PC-9 (cell line): ENCODE measurements at regions of chr4 and their contacts with region 1.

Region 1: GRCh38 chr4:68375667-68376559 is 26.0 kb upstream of the YTHDC1 start:
- DNase-seq: peak; percentile 40 to 65
- H3K4me3 ChIP-seq: peak overlapping the region; percentile 62; the same call in 1 of the 2 replicates
- H3K27ac ChIP-seq: no peak overlapping the region
- H3K4me1 ChIP-seq: 0 out of 2 replicates have a peak, but pooled peaks cover 7% of the 10 kb centered on the region
- H3K27me3 ChIP-seq: no peaks in the 10 kb centered on the region
- CTCF ChIP-seq: peak; percentile 79

Region 2: GRCh38 chr4:67465032-67465762 is 910.7 kb before region 1 on chr4:
- CTCF ChIA-PET with region 1: no interaction called
- POLR2A ChIA-PET with region 1: no interaction called
- intact Hi-C with region 1: no loop called
- DNase-seq: no peak
- H3K4me3 ChIP-seq: no peak overlapping the region
- H3K27ac ChIP-seq: no peak overlapping the region
- H3K4me1 ChIP-seq: no peaks in the 10 kb centered on the region
- H3K27me3 ChIP-seq: no peaks in the 10 kb centered on the region
- CTCF ChIP-seq: no peak

Region 3: GRCh38 chr4:68141852-68142251 is 234.1 kb before region 1 on chr4:
- CTCF ChIA-PET with region 1: no interaction called
- POLR2A ChIA-PET with region 1: no interaction called
- intact Hi-C with region 1: no loop called
- DNase-seq: no peak
- H3K4me3 ChIP-seq: no peak overlapping the region
- H3K27ac ChIP-seq: no peak overlapping the region
- H3K4me1 ChIP-seq: no peaks in the 10 kb centered on the region
- H3K27me3 ChIP-seq: no peaks in the 10 kb centered on the region
- CTCF ChIP-seq: no peak

Region 4: GRCh38 chr4:68271851-68272756 is 103.8 kb before region 1 on chr4:
- CTCF ChIA-PET with region 1: interaction called, 5 read pairs
- POLR2A ChIA-PET with region 1: no interaction called
- intact Hi-C with region 1: loop called (anchors 1 kb)
- DNase-seq: peak in 1 of 2 experiments; percentile 48
- H3K4me3 ChIP-seq: no peak overlapping the region
- H3K27ac ChIP-seq: no peak overlapping the region
- H3K4me1 ChIP-seq: no peaks in the 10 kb centered on the region
- H3K27me3 ChIP-seq: no peaks in the 10 kb centered on the region
- CTCF ChIP-seq: peak; percentile 76

Region 5: GRCh38 chr4:68304731-68305130 is 71.2 kb before region 1 on chr4:
- CTCF ChIA-PET with region 1: no interaction called
- POLR2A ChIA-PET with region 1: no interaction called
- intact Hi-C with region 1: no loop called
- DNase-seq: no peak
- H3K4me3 ChIP-seq: no peak overlapping the region
- H3K27ac ChIP-seq: no peak overlapping the region
- H3K4me1 ChIP-seq: no peaks in the 10 kb centered on the region
- H3K27me3 ChIP-seq: no peaks in the 10 kb centered on the region
- CTCF ChIP-seq: no peak

Region 6: GRCh38 chr4:68326141-68326540 is 49.8 kb before region 1 on chr4:
- CTCF ChIA-PET with region 1: no interaction called
- POLR2A ChIA-PET with region 1: no interaction called
- intact Hi-C with region 1: loop called (anchors 5 kb)
- DNase-seq: no peak
- H3K4me3 ChIP-seq: no peak overlapping the region
- H3K27ac ChIP-seq: no peak overlapping the region
- H3K4me1 ChIP-seq: no peaks in the 10 kb centered on the region
- H3K27me3 ChIP-seq: no peaks in the 10 kb centered on the region
- CTCF ChIP-seq: no peak

Region 7: GRCh38 chr4:68349649-68350360 is 26.1 kb before region 1 on chr4 and contains the start of gene YTHDC1:
- CTCF ChIA-PET with region 1: interaction called, 3 read pairs
- POLR2A ChIA-PET with region 1: no interaction called
- intact Hi-C with region 1: loop called (anchors 2 kb)
- DNase-seq: peak; percentile 87 to 88
- H3K4me3 ChIP-seq: peak within 1 kb of the TSS; percentile 86
- H3K27ac ChIP-seq: peak within 1 kb of the TSS; percentile 89
- H3K4me1 ChIP-seq: peaks cover 23% of the 10 kb centered on the region
- H3K27me3 ChIP-seq: no peaks in the 10 kb centered on the region
- CTCF ChIP-seq: no peak
- total RNA-seq, gene YTHDC1: 64.1 and 83.6 TPM in 2 replicates